Dendritic cell treated with granulocyte-macrophage colony-stimulating factor and Interleukin-4, amounts not matched to agents 40 ng/mL and 50 ng/mL, for 4 days (primary cell): ENCODE measurements at regions of chr15 and their contacts with region 1.

Region 1: GRCh38 chr15:93235926-93236780 is 147.1 kb upstream of the RGMA start:
- H3K4me3 Mint-ChIP-seq: peak overlapping the region; percentile 80
- H3K27ac Mint-ChIP-seq: peak overlapping the region; percentile 95
- H3K4me1 Mint-ChIP-seq: peaks cover 24% of the 10 kb centered on the region
- H3K27me3 Mint-ChIP-seq: no peaks in the 10 kb centered on the region

Region 2: DNA sequence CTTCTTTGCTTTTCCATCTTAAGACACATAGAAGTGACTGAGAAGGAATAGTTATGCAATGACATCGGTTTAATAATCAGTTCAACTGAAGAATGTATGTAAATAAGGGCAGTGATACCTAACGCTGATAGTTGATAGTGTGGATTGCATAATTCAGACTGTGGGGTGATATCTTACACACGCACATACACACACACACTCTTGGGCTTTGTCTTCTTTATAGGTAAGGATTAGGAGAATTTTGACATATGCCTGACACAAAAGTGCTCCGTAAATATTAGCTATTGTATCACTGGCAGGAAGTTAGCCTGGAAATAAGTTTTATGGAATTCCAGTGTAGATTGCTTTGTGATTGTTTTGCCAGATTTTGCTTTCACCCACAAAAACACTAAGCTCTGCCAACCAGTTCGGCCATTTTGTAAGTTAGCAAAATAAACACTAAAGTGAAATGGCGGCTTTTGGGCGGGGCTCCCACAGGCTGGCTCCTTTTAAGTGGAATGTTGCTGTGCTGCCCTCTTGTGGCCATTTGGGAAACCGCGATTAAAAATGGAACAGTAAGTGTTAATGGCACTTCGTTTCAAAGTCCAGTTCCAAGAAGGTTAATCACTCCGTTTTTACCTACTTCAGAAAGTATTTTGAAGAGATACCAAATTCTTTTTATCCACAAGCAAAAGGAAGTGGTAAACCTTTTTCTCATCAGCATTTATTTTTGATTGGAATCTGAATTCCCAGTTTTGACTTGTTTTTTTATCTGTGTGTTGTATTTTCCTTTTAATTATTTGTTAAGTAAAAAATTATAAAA is 318.3 kb before region 1 on chr15:
- intact Hi-C with region 1: no loop called
- H3K4me3 Mint-ChIP-seq: no peak overlapping the region
- H3K27ac Mint-ChIP-seq: peak overlapping the region; percentile 85
- H3K4me1 Mint-ChIP-seq: peaks cover 80% of the 10 kb centered on the region
- H3K27me3 Mint-ChIP-seq: no peaks in the 10 kb centered on the region

Region 3: GRCh38 chr15:93250950-93251349 is 14.8 kb after region 1 on chr15:
- intact Hi-C with region 1: loop called (anchors 2 kb)
- H3K4me3 Mint-ChIP-seq: no peak overlapping the region
- H3K27ac Mint-ChIP-seq: no peak overlapping the region
- H3K4me1 Mint-ChIP-seq: peaks cover 65% of the 10 kb centered on the region
- H3K27me3 Mint-ChIP-seq: peaks cover 4% of the 10 kb centered on the region